ENCODE measurements at regions of chr17 and their contacts with region 1.

Region 1: GRCh38 chr17:67717624-67718329 is at the start of gene NOL11:
- DNase-seq: peak; percentile 100
- H3K4me3 Mint-ChIP-seq: peak within 1 kb of the TSS; percentile 94
- H3K27ac Mint-ChIP-seq: peak within 1 kb of the TSS; percentile 93
- H3K4me1 Mint-ChIP-seq: peaks cover 24% of the 10 kb centered on the region
- H3K27me3 Mint-ChIP-seq: no peaks in the 10 kb centered on the region
- total RNA-seq, gene NOL11: 33.2 to 34.4 TPM

Region 2: GRCh38 chr17:67366193-67367157 is 351.3 kb before region 1 on chr17 and contains the start of gene PSMD12:
- CTCF ChIA-PET with region 1: interaction called, 3 read pairs
- POLR2A ChIA-PET with region 1: interaction called, 14 read pairs
- DNase-seq: peak; percentile 94
- H3K4me3 Mint-ChIP-seq: peak within 1 kb of the TSS; percentile 99
- H3K27ac Mint-ChIP-seq: peak within 1 kb of the TSS; percentile 96
- H3K4me1 Mint-ChIP-seq: peaks cover 49% of the 10 kb centered on the region
- H3K27me3 Mint-ChIP-seq: peaks cover 2% of the 10 kb centered on the region
- total RNA-seq, gene PSMD12: 49.3 to 50.0 TPM

Region 3: DNA sequence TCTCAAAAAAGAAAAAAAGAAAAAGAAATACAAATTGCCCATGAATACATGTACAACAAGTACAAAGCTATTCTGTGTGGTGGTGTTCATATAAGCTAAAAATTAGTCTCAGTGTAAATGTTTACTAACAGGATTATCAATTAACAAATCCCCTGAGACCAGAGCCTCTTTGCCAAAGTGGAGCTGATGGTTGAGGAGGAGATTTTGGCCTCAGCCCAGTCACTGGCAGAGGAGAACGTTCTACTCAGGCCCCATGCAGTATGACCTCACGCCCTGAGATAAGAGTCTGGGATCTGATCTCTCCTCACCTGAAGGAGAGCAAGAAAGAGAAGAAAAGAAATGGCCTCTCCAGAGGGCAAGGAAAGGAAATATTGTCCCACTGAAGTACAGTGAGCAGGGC is 35.6 kb before region 1 on chr17:
- CTCF ChIA-PET with region 1: no interaction called
- POLR2A ChIA-PET with region 1: no interaction called
- DNase-seq: no peak
- H3K4me3 Mint-ChIP-seq: no peak overlapping the region
- H3K27ac Mint-ChIP-seq: no peak overlapping the region
- H3K4me1 Mint-ChIP-seq: no peaks in the 10 kb centered on the region
- H3K27me3 Mint-ChIP-seq: no peaks in the 10 kb centered on the region

Region 4: DNA sequence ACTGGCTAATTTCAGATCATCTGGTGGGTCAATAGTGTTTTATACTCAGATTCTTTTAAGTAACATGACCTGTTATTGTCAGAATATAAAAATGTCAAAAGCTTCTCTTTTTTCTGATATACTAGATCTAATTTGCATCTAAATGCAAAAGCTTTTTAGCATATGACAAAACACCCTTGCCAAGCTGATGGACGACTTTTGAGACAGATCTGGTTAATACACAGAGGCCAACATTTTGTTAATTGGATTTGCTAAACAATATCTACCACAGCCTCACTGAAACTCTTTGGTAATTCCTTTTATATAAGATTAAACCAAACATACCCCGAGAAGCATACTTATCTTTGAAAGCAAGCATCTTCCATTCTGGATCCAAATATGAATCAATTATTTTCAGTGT is 10.3 kb before region 1 on chr17:
- CTCF ChIA-PET with region 1: interaction called, 3 read pairs
- POLR2A ChIA-PET with region 1: interaction called, 15 read pairs
- DNase-seq: no peak
- H3K4me3 Mint-ChIP-seq: no peak overlapping the region
- H3K27ac Mint-ChIP-seq: no peak overlapping the region
- H3K4me1 Mint-ChIP-seq: no peaks in the 10 kb centered on the region
- H3K27me3 Mint-ChIP-seq: peaks cover 18% of the 10 kb centered on the region

Region 5: DNA sequence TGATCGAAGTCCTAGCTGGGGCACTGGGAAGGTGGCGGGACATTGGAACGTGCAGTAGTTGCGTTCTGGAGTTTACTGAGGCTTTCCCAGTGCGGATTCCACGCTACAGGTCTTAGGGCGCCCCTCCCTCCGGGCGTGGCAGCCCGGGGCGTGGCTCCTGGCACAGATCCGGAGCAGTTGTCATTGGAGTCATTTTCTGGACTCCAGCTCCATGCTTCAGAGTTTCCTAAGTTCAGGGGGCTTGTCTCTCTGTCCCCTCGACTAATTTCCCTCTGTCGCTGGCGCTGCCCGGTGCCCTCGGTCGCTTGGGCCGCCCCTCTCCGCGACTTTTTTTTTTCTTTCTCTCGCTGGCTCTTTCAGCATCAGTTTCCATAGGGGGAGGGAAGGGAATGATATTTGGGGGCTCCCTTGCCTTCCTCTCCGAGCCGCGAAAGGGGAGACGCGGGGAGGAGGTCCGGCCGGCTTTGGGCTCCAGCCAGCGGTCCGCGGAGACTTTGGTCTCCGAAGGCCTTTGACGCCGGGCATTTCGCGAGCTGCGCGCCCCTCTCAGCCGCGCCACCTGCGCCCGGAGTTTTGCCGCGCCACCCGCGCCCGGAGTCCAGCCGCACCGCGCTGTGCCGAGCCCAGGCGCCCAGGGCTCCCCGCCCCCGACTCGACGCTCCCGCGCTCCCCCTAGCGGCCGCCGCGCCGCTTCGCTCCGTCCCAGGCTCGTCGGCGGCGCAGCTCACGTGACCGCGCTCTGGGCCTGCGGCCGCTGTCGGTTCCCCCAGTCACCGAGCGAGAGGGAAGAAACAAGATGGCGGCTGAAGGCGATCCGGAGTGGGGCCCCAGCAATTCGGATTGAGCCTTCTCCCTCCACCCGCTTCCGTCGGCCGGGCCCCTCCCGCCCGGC is 107.2 kb after region 1 on chr17 and contains the start of gene BPTF:
- CTCF ChIA-PET with region 1: interaction called, 9 read pairs
- POLR2A ChIA-PET with region 1: interaction called, 23 read pairs
- DNase-seq: peak; percentile 93
- H3K4me3 Mint-ChIP-seq: peak within 1 kb of the TSS; percentile 99
- H3K27ac Mint-ChIP-seq: peak within 1 kb of the TSS; percentile 97
- H3K4me1 Mint-ChIP-seq: peaks cover 30% of the 10 kb centered on the region
- H3K27me3 Mint-ChIP-seq: peaks cover 9% of the 10 kb centered on the region
- total RNA-seq, gene BPTF: 92.9 to 94.5 TPM

Measured in activated CD4-positive, alpha-beta memory T cell treated with anti-CD3 and anti-CD28 coated beads, Interleukin-2, amount 10 ng/mL, durations not matched to agents 7 days and 5 days (primary cell).